ENCODE measurements at regions of chr1 and their contacts with region 1.

Region 1: GRCh38 chr1:187203257-187203656 is 374.5 kb downstream of the PLA2G4A start:
- DNase-seq: no peak
- ATAC-seq: no peak
- H3K4me3 ChIP-seq: no peak overlapping the region
- H3K4me3 Mint-ChIP-seq: no peak overlapping the region
- H3K27ac ChIP-seq: no peak overlapping the region
- H3K27ac Mint-ChIP-seq: no peak overlapping the region
- H3K4me1 ChIP-seq: no peaks in the 10 kb centered on the region
- H3K4me1 Mint-ChIP-seq: no peaks in the 10 kb centered on the region
- H3K27me3 ChIP-seq: no peaks in the 10 kb centered on the region
- H3K27me3 Mint-ChIP-seq: no peaks in the 10 kb centered on the region
- CTCF ChIP-seq: no peak

Region 2: GRCh38 chr1:187384504-187384903 is 181.2 kb after region 1 on chr1:
- CTCF ChIA-PET with region 1: no interaction called
- POLR2A ChIA-PET with region 1: no interaction called
- intact Hi-C with region 1: loop called in 1 of 2 experiments (anchors 5 kb)
- DNase-seq: no peak
- ATAC-seq: no peak
- H3K4me3 ChIP-seq: no peak overlapping the region
- H3K4me3 Mint-ChIP-seq: no peak overlapping the region
- H3K27ac ChIP-seq: no peak overlapping the region
- H3K27ac Mint-ChIP-seq: no peak overlapping the region
- H3K4me1 ChIP-seq: no peaks in the 10 kb centered on the region
- H3K4me1 Mint-ChIP-seq: no peaks in the 10 kb centered on the region
- H3K27me3 ChIP-seq: no peaks in the 10 kb centered on the region
- H3K27me3 Mint-ChIP-seq: no peaks in the 10 kb centered on the region
- CTCF ChIP-seq: no peak

Measured in CD4-positive, alpha-beta T cell (primary cell).